PC-3 (cell line): ENCODE measurements at regions of chr10 and their contacts with region 1.

Region 1: GRCh38 chr10:109450702-109451101 is 472.6 kb downstream of the XPNPEP1 start:
- DNase-seq: no peak
- ATAC-seq: no peak
- H3K4me3 ChIP-seq: no peak overlapping the region
- H3K27ac ChIP-seq: no peak overlapping the region
- H3K4me1 ChIP-seq: peaks cover 20% of the 10 kb centered on the region; the same call in 1 of the 2 replicates
- H3K27me3 ChIP-seq: no peaks in the 10 kb centered on the region
- CTCF ChIP-seq: no peak

Region 2: DNA sequence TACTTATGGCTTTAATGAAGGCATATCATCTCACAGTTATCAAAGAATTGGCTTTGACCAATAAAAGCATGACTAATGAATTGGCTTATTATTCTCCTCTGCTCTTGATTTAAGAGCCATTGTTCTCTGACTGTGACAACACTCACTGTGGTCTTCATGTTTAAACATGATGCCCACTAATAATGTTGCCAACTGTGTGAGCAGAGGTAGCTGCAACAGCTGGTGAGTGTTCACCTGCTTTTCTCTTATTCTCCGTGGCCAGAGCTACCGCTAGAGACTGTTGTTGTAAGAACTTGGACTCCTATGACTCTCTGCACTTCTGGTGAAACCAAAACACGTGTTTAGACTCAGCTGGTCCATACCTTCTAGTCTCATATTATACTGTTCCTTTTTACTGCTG is 136.7 kb after region 1 on chr10:
- CTCF ChIA-PET with region 1: no interaction called
- POLR2A ChIA-PET with region 1: no interaction called
- intact Hi-C with region 1: loop called (anchors 5 kb)
- DNase-seq: peak; percentile 54
- ATAC-seq: peak; percentile 54
- H3K4me3 ChIP-seq: no peak overlapping the region
- H3K27ac ChIP-seq: no peak overlapping the region
- H3K4me1 ChIP-seq: peaks cover 25% of the 10 kb centered on the region
- H3K27me3 ChIP-seq: no peaks in the 10 kb centered on the region
- CTCF ChIP-seq: no peak

Region 3: DNA sequence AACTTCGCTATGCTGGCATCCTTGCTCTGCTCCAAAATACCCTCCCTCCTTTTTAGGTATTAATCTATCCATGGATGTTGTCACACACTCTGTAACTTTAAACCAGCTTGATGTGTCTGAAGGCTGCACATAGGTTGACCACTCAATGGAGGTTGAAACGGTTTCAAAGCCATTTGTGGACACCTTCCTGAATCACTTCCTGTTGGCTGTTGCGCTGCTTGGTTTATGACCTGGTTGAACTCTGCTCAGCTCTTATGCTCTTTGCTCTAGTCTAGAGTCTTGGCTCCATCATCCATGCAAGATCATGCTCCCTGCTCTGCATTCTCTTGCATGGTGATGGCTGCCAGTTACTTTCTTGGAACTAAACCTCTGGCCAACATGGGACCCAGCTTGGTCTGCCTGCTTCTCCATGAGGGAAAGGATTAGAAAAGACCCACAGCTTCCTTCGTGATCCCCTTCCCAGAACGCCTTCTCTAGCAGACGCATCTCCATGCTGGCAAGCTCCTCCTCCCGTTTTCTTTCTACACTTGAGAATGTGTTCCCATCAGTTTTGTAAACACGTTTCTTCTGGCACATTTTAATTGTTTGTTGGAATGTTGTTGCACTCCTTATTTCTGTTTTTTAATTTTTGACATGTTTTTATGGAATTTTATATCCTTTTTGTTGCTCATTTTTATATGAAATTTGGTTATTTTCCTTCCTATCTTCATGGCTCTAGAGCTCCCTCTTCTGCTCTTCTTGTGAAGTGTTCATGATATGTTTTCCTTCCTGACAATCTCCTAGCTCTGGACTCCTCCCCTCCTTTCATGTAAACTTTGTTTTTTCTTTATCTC is 322.8 kb after region 1 on chr10:
- CTCF ChIA-PET with region 1: interaction called, 4 read pairs
- POLR2A ChIA-PET with region 1: interaction called, 3 read pairs
- intact Hi-C with region 1: loop called (anchors 5 kb)
- DNase-seq: peak; percentile 61
- ATAC-seq: peak; percentile 45
- H3K4me3 ChIP-seq: no peak overlapping the region
- H3K27ac ChIP-seq: no peak overlapping the region
- H3K4me1 ChIP-seq: 0 out of 2 replicates have a peak, but pooled peaks cover 3% of the 10 kb centered on the region
- H3K27me3 ChIP-seq: no peaks in the 10 kb centered on the region
- CTCF ChIP-seq: peak; percentile 72